Calu3 (cell line): ENCODE measurements at regions of chr2 and their contacts with region 1.

Region 1: DNA sequence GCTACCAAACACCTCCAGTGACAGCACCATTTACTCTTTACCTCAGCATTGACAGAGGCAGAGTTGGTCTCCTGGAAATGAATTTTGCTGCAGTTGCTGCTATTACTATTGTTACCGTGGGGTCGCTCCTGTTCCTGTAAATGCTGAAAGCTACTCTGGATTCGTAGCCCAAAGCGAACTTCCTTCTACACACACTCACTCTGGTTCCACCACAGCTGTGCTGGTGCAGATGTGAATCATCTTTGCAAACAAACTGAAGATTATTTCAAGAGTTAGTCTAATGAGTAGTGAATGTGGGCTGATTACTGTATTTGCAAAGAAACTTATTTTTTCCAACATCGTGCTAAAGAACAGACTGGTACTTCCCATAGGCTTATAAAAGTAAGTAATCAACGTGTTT is 304.0 kb downstream of the LPIN1 start:
- DNase-seq: no peak
- H3K4me3 Mint-ChIP-seq: no peak overlapping the region
- H3K27ac Mint-ChIP-seq: no peak overlapping the region
- H3K4me1 Mint-ChIP-seq: no peaks in the 10 kb centered on the region
- H3K27me3 Mint-ChIP-seq: peaks cover 43% of the 10 kb centered on the region
- CTCF ChIP-seq: no peak

Region 2: DNA sequence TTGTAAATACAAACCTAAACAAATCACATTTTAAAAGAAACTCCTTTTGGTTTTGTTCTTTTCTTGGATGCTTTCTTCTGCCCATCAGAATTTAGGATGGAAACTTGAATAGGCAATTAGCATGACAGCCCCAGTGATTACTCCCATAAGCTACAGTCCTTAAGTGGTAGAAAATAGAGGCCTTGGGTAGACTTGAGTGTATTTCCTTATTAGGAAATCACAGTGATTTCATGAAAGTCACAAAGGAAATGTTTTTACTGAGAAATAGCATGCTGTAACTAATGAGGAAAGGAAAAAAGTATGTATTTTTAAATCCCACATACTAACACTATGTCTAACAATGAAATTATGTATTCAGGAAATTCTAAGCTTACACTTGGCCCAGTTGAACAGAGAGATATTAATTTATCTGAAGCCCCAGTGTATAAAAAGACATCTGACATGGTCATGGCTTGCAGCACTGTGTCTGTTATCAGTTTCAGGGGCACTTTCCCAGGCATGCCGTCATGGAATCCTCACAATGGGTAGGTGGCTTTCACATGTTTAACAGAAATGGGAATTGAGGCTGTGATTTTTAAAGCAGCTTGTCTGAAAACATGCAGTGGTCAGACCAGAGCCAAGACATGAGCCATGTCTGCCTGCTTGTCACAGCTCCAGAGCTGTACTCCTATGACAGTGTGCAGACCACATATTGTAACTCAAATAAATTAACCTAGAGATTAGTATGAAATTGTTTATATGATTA is 586.6 kb after region 1 on chr2:
- CTCF ChIA-PET with region 1: no interaction called
- intact Hi-C with region 1: loop called (anchors 5 kb)
- DNase-seq: no peak
- H3K4me3 Mint-ChIP-seq: no peak overlapping the region
- H3K27ac Mint-ChIP-seq: no peak overlapping the region
- H3K4me1 Mint-ChIP-seq: no peaks in the 10 kb centered on the region
- H3K27me3 Mint-ChIP-seq: no peaks in the 10 kb centered on the region
- CTCF ChIP-seq: no peak